A673 (cell line): ENCODE measurements at regions of chr17 and their contacts with region 1.

Region 1: DNA sequence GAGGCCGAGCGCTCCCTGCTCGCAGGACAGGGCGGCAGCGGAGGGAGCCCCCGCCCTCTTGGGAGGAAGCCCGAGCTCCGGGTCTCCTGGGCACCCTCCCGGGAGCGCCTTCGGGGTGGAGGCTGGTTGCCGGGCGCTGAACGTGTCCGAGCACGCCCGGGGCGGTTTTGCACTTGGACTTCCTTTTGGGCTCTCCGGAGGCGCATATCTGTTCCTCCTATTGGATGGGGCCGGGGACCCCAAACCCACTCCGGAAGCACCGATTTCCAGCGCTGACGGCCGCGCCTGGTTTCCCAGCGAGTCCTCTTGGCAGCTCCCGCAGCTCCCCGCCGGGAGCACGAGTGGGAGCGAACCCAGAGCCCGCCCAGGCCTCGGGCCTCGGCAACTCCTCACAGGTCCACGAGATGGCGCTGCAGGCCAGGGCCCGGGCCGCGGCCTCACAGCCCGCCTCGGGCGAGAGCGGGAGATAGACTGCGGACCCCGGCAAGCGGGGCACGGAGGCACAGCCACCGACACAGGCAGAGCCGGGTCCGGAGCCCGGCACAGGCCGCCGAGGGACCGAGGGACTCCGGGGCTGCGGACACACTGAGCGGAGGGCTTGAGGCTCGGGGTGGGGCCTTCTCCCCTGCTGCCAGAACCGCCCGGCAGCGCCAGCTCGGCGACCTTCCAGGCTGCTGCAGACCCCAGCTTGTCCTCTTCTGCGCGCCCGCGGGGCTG is 12.7 kb downstream of the TBX2 start:
- DNase-seq: peak; percentile 85
- H3K4me3 ChIP-seq: peak overlapping the region; percentile 59
- H3K27ac ChIP-seq: peak overlapping the region; percentile 76
- H3K4me1 ChIP-seq: peaks cover 21% of the 10 kb centered on the region
- H3K27me3 ChIP-seq: peaks cover 18% of the 10 kb centered on the region
- CTCF ChIP-seq: peak; percentile 98

Region 2: GRCh38 chr17:61551255-61551742 is 139.0 kb after region 1 on chr17:
- CTCF ChIA-PET with region 1: no interaction called
- POLR2A ChIA-PET with region 1: no interaction called
- intact Hi-C with region 1: loop called (anchors 2 kb)
- DNase-seq: peak; percentile 57
- H3K4me3 ChIP-seq: no peak overlapping the region
- H3K27ac ChIP-seq: no peak overlapping the region
- H3K4me1 ChIP-seq: peaks cover 3% of the 10 kb centered on the region
- H3K27me3 ChIP-seq: peaks cover 46% of the 10 kb centered on the region
- CTCF ChIP-seq: peak; percentile 75

Region 3: GRCh38 chr17:61574542-61575174 is 162.4 kb after region 1 on chr17:
- CTCF ChIA-PET with region 1: interaction called, 11 read pairs
- POLR2A ChIA-PET with region 1: no interaction called
- intact Hi-C with region 1: no loop called
- DNase-seq: peak; percentile 30
- H3K4me3 ChIP-seq: no peak overlapping the region
- H3K27ac ChIP-seq: no peak overlapping the region
- H3K4me1 ChIP-seq: no peaks in the 10 kb centered on the region
- H3K27me3 ChIP-seq: no peaks in the 10 kb centered on the region
- CTCF ChIP-seq: peak; percentile 42

Region 4: DNA sequence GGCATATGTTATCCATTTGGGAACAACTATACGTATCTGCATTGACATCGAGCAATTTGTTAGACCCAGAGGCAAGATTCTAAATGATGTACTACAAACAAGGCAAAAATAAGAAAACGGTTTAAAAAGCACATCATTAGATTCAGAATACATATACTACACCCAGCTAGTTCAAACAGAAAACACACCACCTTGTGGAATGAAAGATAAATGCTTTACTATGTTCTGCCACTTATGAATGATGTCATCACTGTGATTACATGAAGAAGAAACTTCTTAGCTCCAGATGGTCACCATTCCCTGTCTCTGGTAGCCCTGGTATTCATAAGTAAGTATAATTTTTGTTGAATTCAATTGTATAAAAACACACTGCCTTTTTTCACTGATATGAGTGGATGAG is 170.9 kb after region 1 on chr17:
- CTCF ChIA-PET with region 1: interaction called, 3 read pairs
- POLR2A ChIA-PET with region 1: no interaction called
- intact Hi-C with region 1: loop called (anchors 5 kb)
- DNase-seq: peak; percentile 66
- H3K4me3 ChIP-seq: no peak overlapping the region
- H3K27ac ChIP-seq: no peak overlapping the region
- H3K4me1 ChIP-seq: no peaks in the 10 kb centered on the region
- H3K27me3 ChIP-seq: no peaks in the 10 kb centered on the region
- CTCF ChIP-seq: peak; percentile 62

Region 5: DNA sequence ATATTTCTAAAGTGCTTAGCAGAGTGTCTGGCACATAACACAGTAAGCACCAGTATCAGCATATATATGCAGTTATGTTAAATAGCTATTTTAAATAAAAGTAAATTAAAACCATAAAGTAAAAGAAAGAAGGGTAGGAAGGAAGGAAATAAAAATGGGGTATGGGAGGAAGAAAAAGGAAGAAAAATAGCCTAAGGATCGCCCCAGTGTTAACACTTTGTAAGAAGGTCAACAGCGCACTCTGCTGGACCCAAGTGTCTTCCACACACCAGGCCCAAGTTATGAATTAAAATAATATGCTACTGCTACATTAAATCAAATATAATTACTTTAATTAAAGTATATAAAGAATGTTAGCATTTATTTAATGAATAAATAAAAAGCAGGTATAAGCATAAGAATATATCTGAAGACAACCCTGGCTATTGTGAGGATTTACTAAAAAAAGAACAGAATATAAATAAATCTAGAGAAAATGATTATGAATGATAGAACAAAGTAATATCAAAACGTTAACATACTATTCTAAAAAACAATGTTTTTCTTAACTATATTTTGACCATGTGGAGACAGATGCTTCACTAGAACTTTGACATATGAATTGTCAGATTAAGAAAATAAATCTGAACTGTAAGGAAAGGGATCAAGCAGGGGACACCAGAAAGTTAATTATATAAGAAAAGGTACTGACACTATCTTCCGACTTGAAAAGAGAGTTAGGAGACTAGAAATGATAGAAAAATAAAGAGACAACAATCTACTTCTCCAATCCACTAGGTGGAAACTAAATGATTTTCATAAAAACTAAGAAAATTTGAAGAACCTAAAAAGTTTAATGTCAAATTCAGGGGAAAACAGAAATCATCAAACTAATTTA is 425.1 kb after region 1 on chr17:
- CTCF ChIA-PET with region 1: no interaction called
- POLR2A ChIA-PET with region 1: no interaction called
- intact Hi-C with region 1: loop called (anchors 5 kb)
- DNase-seq: peak; percentile 76
- H3K4me3 ChIP-seq: no peak overlapping the region
- H3K27ac ChIP-seq: no peak overlapping the region
- H3K4me1 ChIP-seq: no peaks in the 10 kb centered on the region
- H3K27me3 ChIP-seq: no peaks in the 10 kb centered on the region
- CTCF ChIP-seq: peak; percentile 87

Region 6: DNA sequence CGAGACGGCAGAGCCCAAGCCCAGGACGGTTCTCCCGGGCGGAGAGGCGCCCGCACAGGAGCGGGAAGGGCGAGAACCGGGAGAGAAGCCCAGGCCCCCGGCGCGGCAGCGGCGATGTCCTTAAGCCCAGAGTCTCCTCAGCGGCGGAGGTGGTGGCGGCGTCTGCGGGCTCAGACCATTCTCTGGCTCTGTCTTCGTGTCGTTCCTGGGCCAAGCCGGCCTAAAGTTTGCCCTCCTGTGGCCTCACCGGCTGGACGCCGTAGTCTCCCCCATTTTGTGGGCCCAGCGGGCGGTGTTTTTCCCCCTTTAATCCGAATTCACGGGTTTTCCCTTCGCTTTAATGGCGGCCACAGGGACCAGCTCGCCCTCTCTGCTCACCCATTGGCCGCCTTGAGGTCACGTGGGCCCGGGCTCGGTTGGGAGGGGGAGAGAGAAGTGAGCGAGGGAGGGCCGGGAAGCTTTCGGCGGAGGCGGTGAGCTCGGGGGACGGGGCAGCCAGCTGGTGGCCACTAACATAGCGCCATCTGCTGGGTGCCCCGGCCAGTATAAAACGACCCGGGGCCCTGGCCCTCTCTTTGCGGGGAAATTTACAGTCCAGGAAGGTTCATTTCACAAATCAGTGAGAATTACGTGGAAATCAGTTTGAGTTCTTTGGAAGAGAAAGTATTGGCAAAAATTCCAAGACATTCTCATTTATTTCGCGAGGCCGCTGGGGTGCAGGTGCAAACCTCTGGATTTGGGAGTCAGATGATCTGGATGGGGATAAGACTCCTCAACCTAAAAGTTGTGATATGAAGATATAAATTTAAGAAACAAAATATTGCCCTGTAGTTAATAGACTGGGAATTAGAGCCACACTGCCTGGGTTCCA is 653.5 kb after region 1 on chr17:
- CTCF ChIA-PET with region 1: no interaction called
- POLR2A ChIA-PET with region 1: no interaction called
- intact Hi-C with region 1: loop called (anchors 2 kb)
- DNase-seq: peak; percentile 99
- H3K4me3 ChIP-seq: peak overlapping the region; percentile 89
- H3K27ac ChIP-seq: peak overlapping the region; percentile 97
- H3K4me1 ChIP-seq: peaks cover 24% of the 10 kb centered on the region
- H3K27me3 ChIP-seq: no peaks in the 10 kb centered on the region
- CTCF ChIP-seq: peak; percentile 98